ENCODE measurements at regions of chr7 and their contacts with region 1.

Region 1: GRCh38 chr7:105013221-105013815 is 687 bp upstream of the KMT2E start:
- DNase-seq: peak; percentile 93
- H3K4me3 ChIP-seq: peak overlapping the region; percentile 78 to 88 (median 87)
- H3K27ac ChIP-seq: peak overlapping the region; percentile 98 to 100 (median 99)
- H3K4me1 ChIP-seq: peaks cover under 1 to 39% (median 33%) of the 10 kb centered on the region in 4 donors
- H3K27me3 ChIP-seq: no peaks in the 10 kb centered on the region
- CTCF ChIP-seq: peak; percentile 59 to 96 (median 64)
- EP300 ChIP-seq: no peak
- POLR2A ChIP-seq: peak; percentile 99

Region 2: GRCh38 chr7:104943502-104944343 is 69.6 kb before region 1 on chr7:
- in situ Hi-C with region 1: loop called in 1 of 4 experiments (anchors 10 kb)
- intact Hi-C with region 1: no loop called
- DNase-seq: peak; percentile 92
- H3K4me3 ChIP-seq: peak overlapping the region in 1 of 4 donors; percentile 33
- H3K27ac ChIP-seq: peak overlapping the region; percentile 96 to 99 (median 97)
- H3K4me1 ChIP-seq: peaks cover 22 to 59% (median 36%) of the 10 kb centered on the region in 4 donors
- H3K27me3 ChIP-seq: no peaks in the 10 kb centered on the region
- CTCF ChIP-seq: no peak
- EP300 ChIP-seq: peak; percentile 75
- POLR2A ChIP-seq: peak; percentile 31

Region 3: DNA sequence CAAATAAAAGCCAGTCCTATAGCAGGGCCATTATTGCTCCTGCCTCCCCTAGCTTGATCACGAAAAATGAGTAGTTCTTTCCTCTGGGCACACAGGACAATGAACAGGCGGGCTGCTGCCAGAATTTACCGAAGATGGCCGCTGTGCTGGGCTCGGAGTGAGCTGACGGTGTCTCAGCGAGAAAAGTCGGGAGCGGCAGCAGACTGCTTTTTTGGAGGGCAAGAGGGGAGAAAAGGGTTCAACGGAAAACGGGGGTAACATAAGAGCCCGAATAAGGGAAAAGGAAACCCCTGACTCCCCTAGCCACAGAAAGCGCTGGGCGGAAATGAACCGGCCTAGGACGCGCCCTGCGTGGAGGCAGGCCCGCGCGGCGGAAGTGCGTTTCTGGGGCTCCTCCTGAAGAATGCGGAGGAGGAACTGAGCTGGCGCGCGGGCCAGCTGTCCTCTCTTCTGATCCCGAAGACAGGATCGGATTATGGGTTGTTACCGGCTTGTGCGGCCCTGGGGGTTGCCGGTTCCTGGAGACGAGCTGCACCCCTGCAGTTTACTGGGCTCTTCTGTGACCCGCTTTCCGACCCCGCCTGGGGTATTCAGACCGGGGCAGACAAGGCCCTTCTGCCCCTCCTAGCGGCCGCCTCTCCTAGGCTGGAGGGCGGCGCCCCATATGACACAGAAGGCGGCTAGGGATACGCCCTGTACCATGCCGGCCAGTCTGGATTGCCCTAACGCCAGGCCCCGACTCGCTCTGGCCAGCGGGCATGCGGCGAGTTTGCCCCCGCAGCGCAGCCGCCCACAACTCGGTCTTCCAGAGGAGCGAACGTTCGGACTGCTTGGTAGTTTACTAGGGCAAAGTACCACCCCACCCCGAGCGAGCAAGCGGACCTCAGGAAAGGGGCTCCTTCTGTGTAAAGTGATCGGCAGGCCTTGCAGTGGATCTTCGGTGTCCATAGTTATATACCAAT is 29.5 kb before region 1 on chr7:
- in situ Hi-C with region 1: no loop called
- intact Hi-C with region 1: loop called (anchors 5 kb)
- DNase-seq: peak; percentile 91
- H3K4me3 ChIP-seq: peak overlapping the region; percentile 54 to 63 (median 59)
- H3K27ac ChIP-seq: peak overlapping the region in 3 of 4 donors; percentile 95 to 99 (median 98)
- H3K4me1 ChIP-seq: peaks cover 31 to 63% (median 45%) of the 10 kb centered on the region in 4 donors
- H3K27me3 ChIP-seq: no peaks in the 10 kb centered on the region
- CTCF ChIP-seq: peak; percentile 50 to 87 (median 55)
- EP300 ChIP-seq: no peak
- POLR2A ChIP-seq: peak; percentile 94

Measured in transverse colon (tissue), 4 donors.